Activated naive CD4-positive, alpha-beta T cell treated with anti-CD3 and anti-CD28 coated beads for 36 hours (primary cell): ENCODE measurements at regions of chr11 and their contacts with region 1.

Region 1: DNA sequence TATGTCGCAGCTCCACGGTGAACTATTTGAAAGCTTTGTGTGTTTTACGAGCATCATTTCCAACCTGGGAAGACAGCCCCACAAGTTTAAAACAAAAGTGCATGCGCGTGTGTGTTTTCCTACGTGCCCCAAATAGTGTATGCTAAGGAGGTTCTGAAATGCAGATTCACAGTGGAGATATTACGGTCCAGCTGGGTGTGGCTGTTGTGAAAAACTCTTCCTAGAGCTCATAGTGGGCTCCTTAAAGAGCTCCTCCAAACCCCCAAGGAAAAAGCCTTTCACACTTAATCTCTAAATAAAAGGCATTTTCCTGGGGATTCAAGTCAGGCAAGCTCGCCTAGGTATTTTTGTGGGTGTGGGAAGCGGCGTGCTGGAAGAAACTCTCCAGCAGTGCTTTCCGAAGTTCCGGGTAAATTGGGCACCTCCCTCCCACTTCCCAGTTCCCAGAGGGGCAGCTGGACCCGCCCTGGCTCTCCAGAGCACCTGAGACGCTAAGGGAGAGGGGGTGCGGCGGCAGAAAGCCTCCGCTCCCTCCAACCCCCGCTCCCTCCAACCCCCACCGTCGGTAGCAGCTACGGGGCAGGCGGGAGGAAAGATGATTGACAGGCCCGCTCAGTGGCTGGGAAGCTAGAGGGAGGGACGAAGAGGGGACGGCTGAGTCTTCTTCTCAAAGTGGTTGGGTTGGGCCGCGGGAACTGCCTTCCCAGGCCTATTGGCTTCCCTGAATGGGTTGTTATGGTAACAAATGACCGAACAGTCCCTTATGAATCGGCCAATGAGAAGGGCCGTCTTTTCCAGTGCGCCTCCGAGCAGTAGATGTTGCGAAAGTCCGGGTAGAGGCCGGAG is 558 bp upstream of the PCF11 start:
- DNase-seq: peak; percentile 99
- H3K4me3 Mint-ChIP-seq: peak overlapping the region; percentile 98
- H3K27ac Mint-ChIP-seq: peak overlapping the region; percentile 100
- H3K4me1 Mint-ChIP-seq: peaks cover 26% of the 10 kb centered on the region
- H3K27me3 Mint-ChIP-seq: no peaks in the 10 kb centered on the region

Region 2: GRCh38 chr11:82959987-82960778 is 196.2 kb before region 1 on chr11:
- CTCF ChIA-PET with region 1: no interaction called
- intact Hi-C with region 1: loop called (anchors 1 kb)
- DNase-seq: peak; percentile 55
- H3K4me3 Mint-ChIP-seq: peak overlapping the region; percentile 21
- H3K27ac Mint-ChIP-seq: peak overlapping the region; percentile 68
- H3K4me1 Mint-ChIP-seq: peaks cover 82% of the 10 kb centered on the region
- H3K27me3 Mint-ChIP-seq: no peaks in the 10 kb centered on the region

Region 3: GRCh38 chr11:82978422-82979099 is 177.8 kb before region 1 on chr11:
- CTCF ChIA-PET with region 1: no interaction called
- intact Hi-C with region 1: loop called (anchors 1 kb)
- DNase-seq: no peak
- H3K4me3 Mint-ChIP-seq: peak overlapping the region; percentile 0
- H3K27ac Mint-ChIP-seq: peak overlapping the region; percentile 33
- H3K4me1 Mint-ChIP-seq: peaks cover 51% of the 10 kb centered on the region
- H3K27me3 Mint-ChIP-seq: no peaks in the 10 kb centered on the region

Region 4: GRCh38 chr11:83115551-83115950 is 40.8 kb before region 1 on chr11:
- CTCF ChIA-PET with region 1: interaction called, 3 read pairs
- intact Hi-C with region 1: loop called (anchors 1 kb)
- DNase-seq: no peak
- H3K4me3 Mint-ChIP-seq: no peak overlapping the region
- H3K27ac Mint-ChIP-seq: no peak overlapping the region
- H3K4me1 Mint-ChIP-seq: peaks cover 51% of the 10 kb centered on the region
- H3K27me3 Mint-ChIP-seq: no peaks in the 10 kb centered on the region

Region 5: DNA sequence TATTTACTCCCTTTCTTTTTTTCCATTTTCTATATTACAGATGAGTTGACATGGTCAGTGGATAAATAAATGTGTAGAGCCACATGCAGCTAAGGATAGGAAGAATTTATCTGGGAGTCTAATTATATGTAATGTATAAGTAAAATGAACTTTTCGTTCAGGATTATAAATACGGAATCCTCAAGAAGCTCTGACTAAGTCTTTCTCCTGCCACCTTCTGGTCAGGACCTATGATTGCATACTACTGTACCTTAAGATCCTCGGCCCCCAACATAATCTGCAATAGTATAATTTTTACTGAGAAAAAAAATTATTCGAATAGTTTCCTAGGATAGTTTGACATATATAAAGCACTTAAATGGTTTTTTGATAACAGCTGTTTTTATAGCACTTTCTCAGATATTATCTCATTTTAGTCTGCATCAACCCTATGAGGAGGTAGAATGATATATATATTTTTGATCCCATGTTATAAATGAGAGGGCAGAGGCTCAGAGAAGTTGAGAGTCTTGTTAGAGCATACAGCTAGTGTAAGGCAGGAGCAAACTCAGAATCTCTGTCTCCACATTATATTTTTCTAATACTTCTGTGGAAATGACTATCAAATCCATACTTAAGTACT is 93.7 kb after region 1 on chr11:
- CTCF ChIA-PET with region 1: interaction called, 12 read pairs
- intact Hi-C with region 1: loop called (anchors 2 kb)
- DNase-seq: peak; percentile 30
- H3K4me3 Mint-ChIP-seq: no peak overlapping the region
- H3K27ac Mint-ChIP-seq: no peak overlapping the region
- H3K4me1 Mint-ChIP-seq: no peaks in the 10 kb centered on the region
- H3K27me3 Mint-ChIP-seq: no peaks in the 10 kb centered on the region

Region 6: GRCh38 chr11:83326311-83326710 is 169.9 kb after region 1 on chr11:
- CTCF ChIA-PET with region 1: no interaction called
- intact Hi-C with region 1: no loop called
- DNase-seq: no peak
- H3K4me3 Mint-ChIP-seq: no peak overlapping the region
- H3K27ac Mint-ChIP-seq: no peak overlapping the region
- H3K4me1 Mint-ChIP-seq: no peaks in the 10 kb centered on the region
- H3K27me3 Mint-ChIP-seq: peaks cover 24% of the 10 kb centered on the region